MCF 10A (cell line): ENCODE measurements at regions of chr3 and their contacts with region 1.

Region 1: GRCh38 chr3:61858056-61858455 is 296.7 kb downstream of the PTPRG start:
- DNase-seq: peak; percentile 39
- H3K4me3 Mint-ChIP-seq: no peak overlapping the region
- H3K27ac Mint-ChIP-seq: no peak overlapping the region
- H3K4me1 Mint-ChIP-seq: peaks cover 25% of the 10 kb centered on the region
- H3K27me3 Mint-ChIP-seq: no peaks in the 10 kb centered on the region
- CTCF ChIP-seq: peak; percentile 41

Region 2: GRCh38 chr3:62051507-62051906 is 193.5 kb after region 1 on chr3:
- CTCF ChIA-PET with region 1: interaction called, 58 read pairs
- POLR2A ChIA-PET with region 1: no interaction called
- intact Hi-C with region 1: loop called (anchors 1 kb)
- DNase-seq: peak; percentile 65
- H3K4me3 Mint-ChIP-seq: no peak overlapping the region
- H3K27ac Mint-ChIP-seq: no peak overlapping the region
- H3K4me1 Mint-ChIP-seq: peaks cover under 1% of the 10 kb centered on the region
- H3K27me3 Mint-ChIP-seq: no peaks in the 10 kb centered on the region
- CTCF ChIP-seq: peak; percentile 27

Region 3: DNA sequence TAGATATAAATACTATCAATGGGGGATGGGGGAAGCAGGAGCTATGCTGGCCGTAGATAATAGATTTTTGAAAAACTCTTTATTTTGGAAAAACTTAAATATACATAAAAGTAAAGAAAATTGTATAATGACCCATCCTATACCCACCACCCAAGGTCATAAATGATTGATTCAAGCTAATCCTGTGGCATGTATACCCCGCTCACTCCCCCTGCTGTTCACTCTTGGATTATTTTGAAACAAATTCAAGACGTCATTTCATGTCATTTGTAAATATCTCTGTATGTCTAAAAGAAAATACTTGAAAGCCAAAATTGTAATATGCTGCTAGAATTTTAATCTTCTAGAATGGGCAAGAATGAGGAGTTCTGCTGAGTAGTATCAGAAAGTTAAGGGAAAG is 273.5 kb after region 1 on chr3:
- CTCF ChIA-PET with region 1: interaction called, 3 read pairs
- POLR2A ChIA-PET with region 1: no interaction called
- intact Hi-C with region 1: loop called (anchors 1 kb)
- DNase-seq: peak; percentile 32
- H3K4me3 Mint-ChIP-seq: no peak overlapping the region
- H3K27ac Mint-ChIP-seq: no peak overlapping the region
- H3K4me1 Mint-ChIP-seq: peaks cover 20% of the 10 kb centered on the region
- H3K27me3 Mint-ChIP-seq: no peaks in the 10 kb centered on the region
- CTCF ChIP-seq: peak; percentile 47